A673 (cell line): ENCODE measurements at regions of chr14 and their contacts with region 1.

Region 1: GRCh38 chr14:38867561-38868150 is 235.4 kb downstream of the SEC23A start:
- DNase-seq: peak; percentile 90
- H3K4me3 ChIP-seq: no peak overlapping the region
- H3K27ac ChIP-seq: no peak overlapping the region
- H3K4me1 ChIP-seq: peaks cover 17% of the 10 kb centered on the region
- H3K27me3 ChIP-seq: no peaks in the 10 kb centered on the region
- CTCF ChIP-seq: peak; percentile 89

Region 2: DNA sequence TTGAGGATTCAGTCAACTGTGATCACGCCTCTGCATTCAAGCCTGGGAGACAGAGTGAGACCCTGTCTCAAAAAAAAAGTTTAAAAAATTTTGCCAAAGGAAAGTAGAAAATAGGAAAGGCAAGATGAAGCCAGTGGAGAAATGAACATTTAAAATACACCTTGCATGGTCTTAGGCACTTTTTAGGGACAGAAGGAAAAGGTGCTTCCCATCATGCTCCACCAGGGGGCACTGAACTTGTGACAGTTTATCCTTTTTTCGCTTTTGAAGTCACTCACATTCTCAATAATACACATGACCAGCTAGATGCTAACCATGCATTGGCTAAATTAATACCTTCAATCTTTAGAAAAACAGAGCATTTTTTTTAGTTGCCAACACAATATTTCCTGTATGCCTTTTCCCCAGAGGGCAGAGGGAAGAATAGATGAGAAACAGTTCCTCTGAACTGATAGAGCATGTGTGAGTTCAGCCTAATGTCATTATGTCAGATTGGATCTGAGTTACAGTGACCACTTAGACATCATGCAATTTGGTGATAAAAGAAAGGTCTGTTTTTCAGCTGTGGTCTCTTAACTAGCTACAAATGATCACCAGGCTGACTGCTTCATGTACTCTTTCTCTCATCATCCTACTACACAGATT is 881.7 kb before region 1 on chr14:
- CTCF ChIA-PET with region 1: no interaction called
- POLR2A ChIA-PET with region 1: no interaction called
- intact Hi-C with region 1: loop called (anchors 10 kb)
- DNase-seq: peak; percentile 77
- H3K4me3 ChIP-seq: no peak overlapping the region
- H3K27ac ChIP-seq: no peak overlapping the region
- H3K4me1 ChIP-seq: no peaks in the 10 kb centered on the region
- H3K27me3 ChIP-seq: no peaks in the 10 kb centered on the region
- CTCF ChIP-seq: peak; percentile 84

Region 3: DNA sequence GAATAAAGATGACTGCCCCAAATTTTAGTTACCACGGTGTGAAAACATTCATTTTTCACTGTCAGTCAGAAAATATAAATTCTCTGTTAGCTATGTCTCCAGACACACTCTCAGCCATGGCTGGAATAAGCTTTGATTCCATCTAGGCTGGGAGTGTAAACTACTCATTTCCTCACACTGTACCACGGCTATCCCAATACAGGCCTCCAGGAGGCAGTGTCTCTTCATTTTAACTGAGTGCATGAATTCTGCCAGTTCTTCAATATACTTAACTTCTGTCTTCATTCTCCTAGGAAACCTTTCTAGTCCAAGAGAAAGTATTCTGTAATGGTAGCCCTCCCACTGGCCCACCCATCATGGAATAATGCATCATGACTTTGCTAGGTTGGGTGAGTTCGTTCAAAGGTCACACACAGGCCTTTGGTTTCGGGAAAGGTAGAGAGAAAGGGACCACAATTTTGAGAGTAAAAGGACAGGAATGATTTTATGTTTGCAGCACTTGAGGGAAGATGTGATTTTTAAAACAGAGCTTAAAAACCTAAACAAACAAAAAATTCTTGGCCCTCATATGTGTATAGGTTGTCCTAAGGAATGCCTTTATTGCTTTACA is 145.7 kb before region 1 on chr14:
- CTCF ChIA-PET with region 1: interaction called, 3 read pairs
- POLR2A ChIA-PET with region 1: no interaction called
- intact Hi-C with region 1: loop called (anchors 2 kb)
- DNase-seq: peak; percentile 77
- H3K4me3 ChIP-seq: no peak overlapping the region
- H3K27ac ChIP-seq: no peak overlapping the region
- H3K4me1 ChIP-seq: peaks cover 7% of the 10 kb centered on the region
- H3K27me3 ChIP-seq: no peaks in the 10 kb centered on the region
- CTCF ChIP-seq: peak; percentile 90